Gastrocnemius medialis (tissue), 4 donors: ENCODE measurements at regions of chr3 and their contacts with region 1.

Region 1: GRCh38 chr3:46566036-46566641 is at the start of gene LRRC2:
- DNase-seq: peak; percentile 92
- ATAC-seq: peak; percentile 71 to 80
- H3K4me3 ChIP-seq: peak within 1 kb of the TSS; percentile 68 to 86 (median 76)
- H3K27ac ChIP-seq: peak within 1 kb of the TSS; percentile 94 to 99 (median 97)
- H3K4me1 ChIP-seq: peaks cover 28 to 31% of the 10 kb centered on the region in 2 donors
- H3K27me3 ChIP-seq: no peaks in the 10 kb centered on the region
- CTCF ChIP-seq: no peak
- POLR2A ChIP-seq: peak; percentile 97
- total RNA-seq, gene LRRC2: 72.7 to 103 (median 92.1) TPM

Region 2: DNA sequence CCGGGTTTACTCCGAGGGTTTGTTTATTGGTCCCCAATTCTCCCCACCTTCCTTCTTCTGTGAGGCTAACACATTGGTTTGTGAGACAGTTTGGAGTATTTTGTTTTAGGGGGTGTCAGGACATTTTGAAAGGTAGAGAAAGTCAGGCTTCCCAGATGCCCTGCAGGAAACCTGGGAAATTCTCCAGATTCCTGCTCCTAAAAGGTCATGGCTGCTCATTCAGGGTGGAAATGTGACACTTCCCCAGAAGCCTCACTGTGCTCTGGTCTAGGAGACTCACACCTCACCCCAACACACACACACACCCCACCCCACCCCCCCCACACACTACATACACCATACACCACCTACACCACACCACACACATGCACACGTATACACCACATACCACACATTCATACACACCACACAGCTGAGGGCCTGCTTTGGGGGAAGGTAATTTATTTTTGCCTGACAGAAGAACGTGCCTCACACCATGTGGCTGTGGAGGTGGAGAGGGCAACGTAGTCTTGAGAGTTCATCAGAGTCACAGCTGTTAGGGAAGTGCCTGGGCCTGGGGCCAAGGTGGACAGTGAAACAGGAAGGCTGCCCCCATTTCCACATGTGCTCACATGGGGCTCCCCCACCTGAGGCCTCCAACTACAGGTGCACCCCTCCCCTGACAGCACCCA is 1012.0 kb before region 1 on chr3:
- in situ Hi-C with region 1: no loop called
- intact Hi-C with region 1: loop called (anchors 10 kb)
- DNase-seq: peak; percentile 86 to 93
- ATAC-seq: peak; percentile 48 to 55
- H3K4me3 ChIP-seq: no peak overlapping the region
- H3K27ac ChIP-seq: peak overlapping the region; percentile 85 to 90 (median 87)
- H3K4me1 ChIP-seq: peaks cover 87 to 88% of the 10 kb centered on the region in 2 donors
- H3K27me3 ChIP-seq: no peaks in the 10 kb centered on the region
- CTCF ChIP-seq: no peak
- POLR2A ChIP-seq: no peak

Region 3: GRCh38 chr3:46154311-46154710 is 411.8 kb before region 1 on chr3:
- in situ Hi-C with region 1: no loop called
- intact Hi-C with region 1: no loop called
- DNase-seq: no peak
- ATAC-seq: no peak
- H3K4me3 ChIP-seq: no peak overlapping the region
- H3K27ac ChIP-seq: no peak overlapping the region
- H3K4me1 ChIP-seq: no peaks in the 10 kb centered on the region
- H3K27me3 ChIP-seq: no peaks in the 10 kb centered on the region
- CTCF ChIP-seq: no peak
- POLR2A ChIP-seq: no peak

Region 4: DNA sequence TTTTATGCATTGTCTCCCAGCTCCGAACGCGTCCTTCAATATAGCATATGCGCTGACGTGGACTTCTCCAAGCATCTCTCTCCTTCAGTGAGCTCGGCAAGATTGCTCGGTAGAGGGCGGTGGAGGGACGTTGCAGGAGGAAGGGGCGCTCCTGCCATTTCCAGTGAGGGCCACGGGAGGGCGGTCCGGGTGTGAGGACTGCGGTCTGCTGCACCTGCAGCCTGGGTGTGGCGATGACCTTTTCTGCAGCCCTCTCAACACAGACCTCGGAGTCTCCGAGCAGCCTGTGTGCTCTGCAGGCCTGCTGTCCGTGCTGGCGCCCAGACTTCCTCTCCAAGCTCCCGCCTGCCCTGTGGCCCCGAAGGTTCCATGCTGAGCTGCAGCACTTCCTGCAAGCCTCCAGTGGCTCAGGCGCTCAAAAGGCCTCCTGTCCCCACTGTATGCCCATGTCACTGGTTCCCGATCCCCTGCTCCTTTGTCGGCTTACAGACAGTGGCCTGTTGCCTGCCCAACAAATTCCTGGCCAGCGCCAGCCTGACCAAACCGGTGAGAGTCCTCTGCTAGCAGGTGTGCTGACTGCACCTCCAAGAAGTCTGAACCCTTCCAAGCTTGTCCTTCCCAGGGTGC is 77.3 kb before region 1 on chr3:
- in situ Hi-C with region 1: loop called in 1 of 4 experiments (anchors 5 kb)
- intact Hi-C with region 1: no loop called
- DNase-seq: peak; percentile 87 to 90
- ATAC-seq: peak; percentile 49 to 63
- H3K4me3 ChIP-seq: no peak overlapping the region
- H3K27ac ChIP-seq: peak overlapping the region; percentile 83 to 86 (median 86)
- H3K4me1 ChIP-seq: peaks cover 34 to 35% of the 10 kb centered on the region in 2 donors
- H3K27me3 ChIP-seq: no peaks in the 10 kb centered on the region
- CTCF ChIP-seq: peak; percentile 94 to 99 (median 98)
- POLR2A ChIP-seq: no peak

Region 5: DNA sequence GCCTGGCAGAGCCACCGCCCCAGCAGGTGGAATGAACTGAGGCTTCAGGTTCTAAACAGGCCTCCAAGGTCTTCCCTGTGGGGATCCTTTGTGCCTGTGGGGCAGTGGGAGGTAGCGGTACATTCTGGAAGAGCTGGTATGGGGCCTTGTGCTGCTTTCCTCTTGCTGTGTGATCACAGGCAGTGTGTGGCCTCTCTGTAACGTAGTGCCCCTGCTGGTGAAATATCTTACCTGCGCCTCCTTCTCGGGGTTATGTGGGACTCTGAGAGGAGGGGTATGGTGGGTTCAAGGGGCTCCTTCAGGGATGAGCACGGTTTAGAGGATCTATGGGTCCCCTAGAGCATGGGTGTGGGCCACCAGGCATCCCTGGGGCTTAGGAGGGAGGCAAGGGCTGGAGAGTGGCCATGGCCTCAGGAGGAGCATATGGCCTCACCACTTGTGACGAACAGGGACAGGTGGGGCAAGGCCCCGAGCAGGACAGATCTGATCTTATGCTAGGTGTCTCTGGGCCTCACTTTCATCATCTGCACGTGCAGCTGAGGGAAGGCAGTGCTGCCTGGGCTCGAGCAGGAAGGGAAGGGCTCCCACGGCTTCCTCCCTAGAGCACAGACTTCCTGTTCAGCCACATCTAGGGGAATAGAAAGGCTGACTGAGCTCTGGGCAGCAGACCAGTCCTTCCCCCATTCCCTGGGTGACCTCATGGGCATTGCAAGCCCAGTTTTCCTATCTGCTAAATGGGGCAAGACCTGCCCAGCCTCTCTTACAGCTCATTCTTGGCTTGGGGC is 129.2 kb after region 1 on chr3:
- in situ Hi-C with region 1: no loop called
- intact Hi-C with region 1: loop called (anchors 2 kb)
- DNase-seq: peak; percentile 72 to 83
- ATAC-seq: peak; percentile 29 to 33
- H3K4me3 ChIP-seq: no peak overlapping the region
- H3K27ac ChIP-seq: peak overlapping the region; percentile 93 to 97 (median 96)
- H3K4me1 ChIP-seq: peaks cover 62% of the 10 kb centered on the region in 2 donors
- H3K27me3 ChIP-seq: no peaks in the 10 kb centered on the region
- CTCF ChIP-seq: peak in 3 of 5 experiments; percentile 33 to 55 (median 38)
- POLR2A ChIP-seq: no peak

Region 6: GRCh38 chr3:46935168-46935858 is 369.2 kb after region 1 on chr3:
- in situ Hi-C with region 1: no loop called
- intact Hi-C with region 1: loop called (anchors 10 kb)
- DNase-seq: peak; percentile 94 to 99
- ATAC-seq: peak; percentile 92 to 94
- H3K4me3 ChIP-seq: no peak overlapping the region
- H3K27ac ChIP-seq: peak overlapping the region; percentile 90 to 96 (median 92)
- H3K4me1 ChIP-seq: peaks cover 89 to 90% of the 10 kb centered on the region in 2 donors
- H3K27me3 ChIP-seq: no peaks in the 10 kb centered on the region
- CTCF ChIP-seq: peak; percentile 63 to 88 (median 69)
- POLR2A ChIP-seq: peak; percentile 14 to 41